ENCODE measurements at regions of chr12 and their contacts with region 1.

Region 1: DNA sequence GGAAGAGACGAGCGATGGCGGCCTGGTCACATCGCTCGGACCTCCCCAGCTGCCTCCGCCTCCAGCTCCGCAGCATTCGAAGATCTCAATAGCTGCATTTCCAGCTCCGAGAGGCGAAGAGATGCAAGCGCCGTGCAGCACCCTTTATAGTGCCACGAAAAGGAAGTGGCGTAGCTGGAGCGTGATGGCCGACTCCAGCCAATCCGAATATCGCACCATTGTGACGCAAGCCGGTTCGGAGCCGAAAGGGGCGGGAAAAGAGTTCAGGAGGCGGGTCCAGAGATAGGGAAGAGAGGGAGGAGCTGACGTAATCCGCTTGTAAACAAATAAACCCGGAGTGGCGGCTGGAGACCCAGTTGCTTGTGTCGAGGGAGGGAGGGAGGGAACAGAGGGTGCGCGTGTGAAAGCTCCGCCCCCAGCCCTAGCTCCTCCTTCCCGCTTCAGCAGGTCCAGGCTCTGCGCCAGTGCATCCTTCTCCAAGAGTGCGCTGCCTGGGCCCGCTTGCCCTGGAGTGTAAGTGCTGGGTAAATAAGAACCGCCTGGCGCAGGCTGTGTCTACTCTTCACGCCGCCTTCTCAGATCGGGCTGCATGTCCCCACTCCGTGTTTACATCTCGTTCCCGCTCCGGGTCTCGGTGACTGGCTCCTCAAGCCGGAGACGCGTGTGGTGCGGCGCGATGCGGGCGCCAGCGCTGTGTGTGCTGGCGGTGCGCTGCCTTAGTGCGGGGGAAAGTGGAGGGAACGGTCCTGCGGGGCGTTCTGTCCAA is at the start of gene BTG1:
- DNase-seq: peak; percentile 90 to 100 (median 100)
- ATAC-seq: peak; percentile 84
- H3K4me3 ChIP-seq: peak within 1 kb of the TSS; percentile 98
- H3K4me3 Mint-ChIP-seq: peak within 1 kb of the TSS; percentile 94 to 100 (median 98)
- H3K27ac ChIP-seq: peak within 1 kb of the TSS; percentile 91
- H3K27ac Mint-ChIP-seq: peak within 1 kb of the TSS; percentile 98 to 100 (median 99)
- H3K4me1 ChIP-seq: peaks cover 7 to 14% of the 10 kb centered on the region in 2 donors
- H3K4me1 Mint-ChIP-seq: peaks cover 18 to 34% (median 27%) of the 10 kb centered on the region in 7 donors
- H3K27me3 ChIP-seq: no peaks in the 10 kb centered on the region
- H3K27me3 Mint-ChIP-seq: peaks cover 0 to 4% (median 0%) of the 10 kb centered on the region in 5 donors
- total RNA-seq, gene BTG1: 188 to 1,246 (median 571) TPM

Region 2: DNA sequence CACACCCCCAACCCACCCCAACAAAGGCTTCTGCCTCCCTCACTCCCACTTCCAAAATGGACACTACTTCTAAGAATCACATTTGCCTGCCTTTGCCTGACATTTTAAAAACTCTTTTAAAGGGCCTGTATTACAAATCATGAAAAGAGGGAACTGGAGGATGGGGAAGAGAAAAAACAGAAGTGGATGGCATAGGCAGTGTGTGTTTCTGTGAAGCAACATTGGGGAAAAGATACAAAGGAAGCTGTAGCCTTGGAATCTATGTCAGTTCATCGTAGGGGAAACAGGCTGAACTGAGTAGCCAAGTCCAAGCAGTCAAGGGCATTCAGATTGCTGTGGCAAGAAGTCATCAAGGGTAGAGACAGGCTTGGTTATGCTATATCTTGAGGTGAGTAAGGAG is 274.2 kb before region 1 on chr12:
- CTCF ChIA-PET with region 1: interaction called, 15 read pairs
- POLR2A ChIA-PET with region 1: interaction called, 193 read pairs
- intact Hi-C with region 1: no loop called
- DNase-seq: no peak
- ATAC-seq: peak; percentile 68
- H3K4me3 ChIP-seq: no peak overlapping the region
- H3K4me3 Mint-ChIP-seq: peak overlapping the region in 6 of 10 donors; percentile 10 to 66 (median 57)
- H3K27ac ChIP-seq: peak overlapping the region; percentile 68
- H3K27ac Mint-ChIP-seq: peak overlapping the region in 8 of 9 donors; percentile 86 to 96 (median 91)
- H3K4me1 ChIP-seq: peaks cover 46 to 53% of the 10 kb centered on the region in 2 donors
- H3K4me1 Mint-ChIP-seq: peaks cover 31 to 79% (median 67%) of the 10 kb centered on the region in 7 donors
- H3K27me3 ChIP-seq: no peaks in the 10 kb centered on the region
- H3K27me3 Mint-ChIP-seq: no peaks in the 10 kb centered on the region

Region 3: DNA sequence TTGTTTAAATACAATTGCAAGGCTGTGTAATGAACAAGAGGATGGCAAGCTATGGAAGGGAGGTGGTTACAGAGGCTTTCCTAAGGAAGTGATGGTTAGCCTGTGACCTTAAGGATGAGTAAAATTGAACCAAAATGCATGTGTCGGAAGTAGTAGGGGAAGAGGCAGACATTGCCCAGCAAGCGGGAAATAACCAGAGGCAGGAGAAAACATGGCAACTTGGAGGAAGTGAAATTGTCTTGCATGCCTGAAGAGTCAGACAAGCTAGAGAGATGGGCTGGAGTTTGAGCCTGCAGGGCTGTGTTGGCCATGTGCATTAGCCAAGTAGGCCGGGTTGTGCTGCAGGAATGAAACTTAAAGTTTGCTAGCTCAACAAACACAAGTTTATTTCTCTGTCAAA is 96.5 kb before region 1 on chr12:
- CTCF ChIA-PET with region 1: interaction called, 4 read pairs
- POLR2A ChIA-PET with region 1: interaction called, 377 read pairs
- intact Hi-C with region 1: no loop called
- DNase-seq: no peak
- ATAC-seq: no peak
- H3K4me3 ChIP-seq: no peak overlapping the region
- H3K4me3 Mint-ChIP-seq: peak overlapping the region in 1 of 10 donors; percentile 34
- H3K27ac ChIP-seq: no peak overlapping the region
- H3K27ac Mint-ChIP-seq: peak overlapping the region in 4 of 9 donors; percentile 14 to 99 (median 74)
- H3K4me1 ChIP-seq: peaks cover 0 to 34% of the 10 kb centered on the region in 2 donors
- H3K4me1 Mint-ChIP-seq: peaks cover 26 to 89% (median 80%) of the 10 kb centered on the region in 7 donors
- H3K27me3 ChIP-seq: no peaks in the 10 kb centered on the region
- H3K27me3 Mint-ChIP-seq: no peaks in the 10 kb centered on the region

Region 4: DNA sequence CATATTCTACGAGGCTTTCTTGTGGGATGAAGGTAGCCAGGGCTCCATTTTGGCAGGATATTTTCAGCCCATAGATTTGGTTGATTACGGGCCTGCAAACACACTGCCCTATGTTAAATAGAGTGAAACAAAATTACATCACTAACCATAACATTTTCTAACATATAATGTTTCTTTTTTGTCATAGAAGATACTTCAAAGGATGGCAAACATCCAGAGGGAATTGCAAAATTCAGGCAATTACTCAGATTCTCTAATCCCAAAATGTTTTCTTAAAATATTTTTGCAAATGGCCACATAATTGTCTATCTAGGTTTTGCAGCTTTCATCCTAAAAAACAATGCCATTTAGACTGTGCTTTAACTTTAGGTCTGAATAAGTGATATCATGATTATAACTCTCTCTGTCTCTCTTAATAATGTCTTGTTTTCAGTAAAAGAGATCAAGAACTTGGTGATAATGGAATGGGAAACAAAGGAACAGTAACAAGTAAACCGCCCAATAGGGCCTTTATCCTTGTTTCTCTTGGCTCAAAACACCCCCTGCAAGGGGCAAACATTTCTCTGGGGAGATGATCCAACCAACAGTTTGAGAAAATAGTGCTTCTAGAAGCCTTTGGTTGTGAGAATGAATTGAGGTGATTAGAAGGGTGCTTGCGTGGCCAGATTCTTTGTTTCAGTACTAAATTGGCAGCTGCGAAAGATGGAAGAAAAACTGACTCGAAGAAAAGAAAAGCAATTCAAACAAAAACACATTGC is 54.1 kb after region 1 on chr12:
- CTCF ChIA-PET with region 1: no interaction called
- POLR2A ChIA-PET with region 1: interaction called, 13 read pairs
- intact Hi-C with region 1: no loop called
- DNase-seq: no peak
- ATAC-seq: no peak
- H3K4me3 ChIP-seq: no peak overlapping the region
- H3K4me3 Mint-ChIP-seq: no peak overlapping the region
- H3K27ac ChIP-seq: no peak overlapping the region
- H3K27ac Mint-ChIP-seq: no peak overlapping the region
- H3K4me1 ChIP-seq: no peaks in the 10 kb centered on the region
- H3K4me1 Mint-ChIP-seq: peaks cover 0 to 28% (median 21%) of the 10 kb centered on the region in 7 donors
- H3K27me3 ChIP-seq: no peaks in the 10 kb centered on the region
- H3K27me3 Mint-ChIP-seq: no peaks in the 10 kb centered on the region

Region 5: GRCh38 chr12:92341065-92341668 is 195.3 kb after region 1 on chr12:
- CTCF ChIA-PET with region 1: no interaction called
- POLR2A ChIA-PET with region 1: interaction called, 6 read pairs
- intact Hi-C with region 1: loop called in 1 of 2 experiments (anchors 5 kb)
- DNase-seq: peak in 3 of 9 donors; percentile 23 to 32 (median 28)
- ATAC-seq: peak; percentile 79
- H3K4me3 ChIP-seq: peak overlapping the region; percentile 5
- H3K4me3 Mint-ChIP-seq: peak overlapping the region; percentile 14 to 79 (median 69)
- H3K27ac ChIP-seq: peak overlapping the region; percentile 51
- H3K27ac Mint-ChIP-seq: peak overlapping the region; percentile 35 to 90 (median 83)
- H3K4me1 ChIP-seq: peaks cover 0 to 11% of the 10 kb centered on the region in 2 donors
- H3K4me1 Mint-ChIP-seq: peaks cover 2 to 38% (median 20%) of the 10 kb centered on the region in 7 donors
- H3K27me3 ChIP-seq: no peaks in the 10 kb centered on the region
- H3K27me3 Mint-ChIP-seq: no peaks in the 10 kb centered on the region

Region 6: DNA sequence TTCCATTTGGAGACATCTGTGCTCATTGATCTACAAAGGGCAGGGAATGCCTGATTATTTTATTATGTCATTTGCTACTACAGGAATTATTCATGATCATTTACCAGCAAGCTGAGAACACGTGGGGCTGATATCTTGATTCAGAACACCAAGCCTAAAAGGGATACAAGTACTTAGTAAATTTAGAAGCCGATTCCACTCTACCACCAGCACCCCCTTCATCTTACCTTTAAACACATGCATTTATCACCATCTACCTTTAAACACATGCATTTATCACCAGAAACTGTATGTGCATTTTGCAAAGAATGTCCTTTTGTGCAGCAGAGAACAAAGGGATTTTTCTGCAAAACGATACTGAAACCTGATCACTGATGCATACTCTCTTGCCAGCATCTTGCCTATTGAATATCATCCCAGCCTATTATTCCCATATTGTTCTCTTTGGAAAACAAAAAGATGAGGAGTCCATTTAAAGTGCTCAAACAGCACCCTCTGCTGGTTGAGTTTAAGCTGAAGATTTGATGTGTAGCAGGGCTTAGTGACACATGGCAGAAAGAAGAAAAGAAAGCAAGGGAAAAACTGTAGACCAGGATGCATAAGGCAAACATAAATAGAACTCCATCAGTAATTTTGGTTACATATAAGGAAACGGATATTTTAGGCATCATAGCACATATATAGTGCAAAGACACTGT is 424.3 kb after region 1 on chr12:
- CTCF ChIA-PET with region 1: interaction called, 30 read pairs
- POLR2A ChIA-PET with region 1: interaction called, 202 read pairs
- intact Hi-C with region 1: loop called (anchors 1 kb)
- DNase-seq: peak in 7 of 9 donors; percentile 67 to 86 (median 80)
- ATAC-seq: peak; percentile 92
- H3K4me3 ChIP-seq: no peak overlapping the region
- H3K4me3 Mint-ChIP-seq: no peak overlapping the region
- H3K27ac ChIP-seq: peak overlapping the region; percentile 52
- H3K27ac Mint-ChIP-seq: no peak overlapping the region
- H3K4me1 ChIP-seq: peaks cover 11 to 13% of the 10 kb centered on the region in 2 donors
- H3K4me1 Mint-ChIP-seq: peaks cover 0 to 37% (median 6%) of the 10 kb centered on the region in 7 donors
- H3K27me3 ChIP-seq: no peaks in the 10 kb centered on the region
- H3K27me3 Mint-ChIP-seq: no peaks in the 10 kb centered on the region

Region 7: DNA sequence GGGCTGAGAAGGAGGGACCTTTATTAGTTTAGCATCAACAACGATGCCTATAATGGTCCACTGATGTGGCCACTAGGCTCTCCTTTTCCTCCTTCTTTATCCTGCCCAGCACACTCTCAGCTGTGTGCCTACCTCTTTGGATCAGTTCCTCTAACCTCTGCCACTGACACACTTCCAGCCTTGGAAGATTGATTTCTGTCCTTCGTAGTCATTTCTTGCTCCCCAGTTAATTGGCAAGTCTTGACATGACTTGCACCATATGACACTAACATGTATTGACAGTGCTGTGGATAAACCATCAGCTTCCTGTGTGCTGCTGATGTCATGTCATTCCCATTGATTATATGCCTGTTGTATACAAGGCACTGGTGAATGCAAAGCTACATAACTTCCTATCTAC is 466.7 kb after region 1 on chr12:
- CTCF ChIA-PET with region 1: no interaction called
- POLR2A ChIA-PET with region 1: no interaction called
- intact Hi-C with region 1: no loop called
- DNase-seq: no peak
- ATAC-seq: no peak
- H3K4me3 ChIP-seq: no peak overlapping the region
- H3K4me3 Mint-ChIP-seq: no peak overlapping the region
- H3K27ac ChIP-seq: no peak overlapping the region
- H3K27ac Mint-ChIP-seq: peak overlapping the region in 2 of 9 donors; percentile 2 to 71
- H3K4me1 ChIP-seq: no peaks in the 10 kb centered on the region
- H3K4me1 Mint-ChIP-seq: peaks cover 9 to 13% (median 11%) of the 10 kb centered on the region in 7 donors
- H3K27me3 ChIP-seq: no peaks in the 10 kb centered on the region
- H3K27me3 Mint-ChIP-seq: no peaks in the 10 kb centered on the region